ENCODE measurements at regions of chr9 and their contacts with region 1.

Region 1: DNA sequence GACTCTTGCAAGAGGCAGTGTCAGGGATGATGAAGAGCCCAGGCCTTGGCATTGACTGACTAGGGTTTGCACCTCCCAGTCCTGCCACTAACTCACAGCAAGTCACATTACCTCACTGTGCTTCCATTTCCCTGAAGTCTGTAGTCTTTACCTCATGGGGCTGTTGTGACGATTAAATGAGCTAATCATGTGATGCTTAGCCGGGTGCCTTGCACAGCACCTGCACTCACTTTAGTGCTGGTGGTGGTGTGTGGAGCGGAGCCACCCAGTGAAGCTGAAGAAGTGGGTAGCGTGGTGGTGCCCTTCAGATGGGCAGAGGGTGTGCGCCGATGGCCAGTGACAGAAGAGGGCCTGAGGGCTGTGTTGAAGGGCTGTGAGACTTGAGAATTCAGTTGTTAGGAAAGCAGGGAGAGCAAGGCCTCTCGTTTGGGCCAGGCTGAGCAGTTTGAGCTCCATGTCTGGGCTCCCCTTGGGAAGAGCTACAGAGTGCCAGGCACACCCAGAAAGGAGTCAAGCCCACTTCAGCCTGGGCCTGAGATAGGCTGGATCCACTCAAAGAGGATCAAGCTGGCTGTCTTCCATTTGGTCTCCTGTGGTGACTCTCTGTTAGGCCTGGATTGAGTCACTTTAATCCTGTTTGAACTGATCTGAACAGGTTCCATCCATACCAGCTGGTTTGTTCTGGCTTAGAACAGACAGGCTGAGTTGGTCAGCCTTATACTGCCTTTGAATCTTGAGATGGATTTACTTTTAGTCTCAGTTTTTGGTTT is 42.5 kb downstream of the RALGPS1 start:
- DNase-seq: no peak
- H3K4me3 ChIP-seq: no peak overlapping the region
- H3K27ac ChIP-seq: no peak overlapping the region
- H3K4me1 ChIP-seq: no peaks in the 10 kb centered on the region
- H3K27me3 ChIP-seq: no peaks in the 10 kb centered on the region
- CTCF ChIP-seq: no peak
- EP300 ChIP-seq: no peak
- POLR2A ChIP-seq: no peak

Region 2: DNA sequence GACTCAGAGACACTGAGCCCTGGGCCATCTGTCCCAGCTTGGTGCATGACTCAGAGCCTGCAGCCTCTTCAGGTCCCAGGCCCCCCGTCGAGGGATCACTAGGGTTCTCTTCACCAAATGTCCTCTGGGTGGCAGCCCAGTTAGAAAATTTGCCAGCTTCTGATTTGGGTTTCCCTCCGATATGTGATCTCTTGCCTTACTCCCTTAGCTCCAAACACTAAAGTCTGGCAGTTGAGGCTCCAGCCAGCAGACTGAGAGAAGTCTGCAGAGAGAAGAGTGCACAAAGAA is 248.0 kb after region 1 on chr9:
- intact Hi-C with region 1: loop called in 1 of 4 experiments (anchors 5 kb)
- DNase-seq: peak in 2 of 5 donors; percentile 23 to 36
- H3K4me3 ChIP-seq: no peak overlapping the region
- H3K27ac ChIP-seq: no peak overlapping the region
- H3K4me1 ChIP-seq: no peaks in the 10 kb centered on the region
- H3K27me3 ChIP-seq: no peaks in the 10 kb centered on the region
- CTCF ChIP-seq: no peak
- EP300 ChIP-seq: no peak
- POLR2A ChIP-seq: no peak